ENCODE measurements at regions of chr1 and their contacts with region 1.

Region 1: DNA sequence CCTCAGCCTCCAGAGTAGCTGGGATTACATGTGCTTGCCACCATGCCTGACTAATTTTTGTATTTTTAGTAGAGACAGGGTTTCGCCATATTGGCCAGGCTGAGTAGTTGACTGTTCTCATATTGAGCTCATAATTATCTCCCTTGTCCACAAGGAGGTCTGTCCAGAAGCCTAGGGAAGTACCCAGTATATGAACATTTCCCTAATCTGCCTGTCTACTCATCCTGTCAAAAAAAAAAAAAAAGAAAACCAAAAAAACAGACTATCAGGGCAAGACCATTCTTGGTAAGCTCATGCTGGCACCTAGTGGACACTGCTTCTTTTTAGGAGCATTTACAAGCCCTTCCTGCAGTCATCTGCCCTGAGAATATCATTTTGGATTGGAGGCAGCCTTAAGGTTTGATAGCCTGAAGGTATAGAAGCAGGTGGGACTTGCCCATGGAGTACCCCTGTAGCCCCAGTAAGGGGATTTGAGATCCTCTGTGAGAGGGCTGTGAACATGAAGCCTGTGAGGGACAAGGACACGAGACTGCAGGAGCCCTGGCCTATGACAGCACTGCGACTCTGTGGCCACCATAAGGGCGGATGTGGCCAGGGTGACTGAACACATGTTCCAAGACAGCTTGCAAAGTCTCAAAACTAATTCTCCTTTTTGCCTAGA is 10.8 kb upstream of the DUSP12 start:
- DNase-seq: peak; percentile 69
- ATAC-seq: peak; percentile 67
- H3K4me3 Mint-ChIP-seq: no peak overlapping the region
- H3K27ac Mint-ChIP-seq: no peak overlapping the region
- H3K4me1 Mint-ChIP-seq: peaks cover 23% of the 10 kb centered on the region
- H3K27me3 Mint-ChIP-seq: peaks cover 15% of the 10 kb centered on the region

Region 2: DNA sequence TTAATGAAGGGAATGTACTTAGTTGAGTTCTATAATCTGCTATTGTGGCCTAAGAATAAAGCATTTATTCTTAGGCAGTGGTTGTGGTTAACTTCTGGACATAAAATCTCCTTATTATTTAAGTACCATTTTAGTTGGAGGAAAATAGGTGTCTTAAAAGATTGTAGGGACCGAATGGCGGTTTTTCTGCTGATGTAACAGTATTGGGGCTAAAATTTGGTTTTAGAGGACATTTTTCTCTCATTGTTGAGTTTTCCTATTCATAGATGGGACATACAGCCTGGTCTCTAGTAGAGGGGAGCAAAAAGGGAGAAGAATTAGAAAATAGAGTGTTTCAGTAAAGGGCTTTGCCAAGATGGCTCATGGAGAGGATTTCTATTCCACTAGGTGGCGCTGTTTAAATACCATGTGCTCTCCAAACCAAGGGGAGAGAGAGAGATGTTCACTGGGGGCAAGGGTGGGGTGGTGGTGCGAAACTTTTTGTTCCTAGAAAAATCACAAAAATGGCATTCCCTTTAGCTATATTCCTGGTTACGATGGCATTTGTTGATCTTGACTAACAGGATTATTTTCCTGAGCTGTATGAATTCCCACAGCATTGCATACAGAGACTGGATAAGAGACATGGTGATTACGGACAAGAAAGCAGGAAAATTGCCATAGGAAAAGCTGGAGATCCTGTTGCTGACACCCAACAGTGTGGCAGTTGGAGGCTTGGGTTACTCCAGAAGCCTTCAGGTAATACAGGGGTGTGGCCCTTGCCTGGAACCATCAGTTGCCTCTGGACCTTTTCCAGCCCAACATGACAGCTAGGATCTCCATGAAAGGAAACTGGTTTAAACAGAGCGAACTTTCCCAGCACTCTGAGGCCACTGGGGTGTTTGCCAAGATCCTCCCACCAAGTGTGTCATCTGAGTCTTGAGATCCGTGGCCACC is 251.7 kb before region 1 on chr1:
- CTCF ChIA-PET with region 1: interaction called, 32 read pairs
- POLR2A ChIA-PET with region 1: no interaction called
- intact Hi-C with region 1: loop called (anchors 1 kb)
- DNase-seq: peak; percentile 45
- ATAC-seq: peak; percentile 58
- H3K4me3 Mint-ChIP-seq: no peak overlapping the region
- H3K27ac Mint-ChIP-seq: no peak overlapping the region
- H3K4me1 Mint-ChIP-seq: peaks cover 12% of the 10 kb centered on the region
- H3K27me3 Mint-ChIP-seq: peaks cover 30% of the 10 kb centered on the region

Region 3: DNA sequence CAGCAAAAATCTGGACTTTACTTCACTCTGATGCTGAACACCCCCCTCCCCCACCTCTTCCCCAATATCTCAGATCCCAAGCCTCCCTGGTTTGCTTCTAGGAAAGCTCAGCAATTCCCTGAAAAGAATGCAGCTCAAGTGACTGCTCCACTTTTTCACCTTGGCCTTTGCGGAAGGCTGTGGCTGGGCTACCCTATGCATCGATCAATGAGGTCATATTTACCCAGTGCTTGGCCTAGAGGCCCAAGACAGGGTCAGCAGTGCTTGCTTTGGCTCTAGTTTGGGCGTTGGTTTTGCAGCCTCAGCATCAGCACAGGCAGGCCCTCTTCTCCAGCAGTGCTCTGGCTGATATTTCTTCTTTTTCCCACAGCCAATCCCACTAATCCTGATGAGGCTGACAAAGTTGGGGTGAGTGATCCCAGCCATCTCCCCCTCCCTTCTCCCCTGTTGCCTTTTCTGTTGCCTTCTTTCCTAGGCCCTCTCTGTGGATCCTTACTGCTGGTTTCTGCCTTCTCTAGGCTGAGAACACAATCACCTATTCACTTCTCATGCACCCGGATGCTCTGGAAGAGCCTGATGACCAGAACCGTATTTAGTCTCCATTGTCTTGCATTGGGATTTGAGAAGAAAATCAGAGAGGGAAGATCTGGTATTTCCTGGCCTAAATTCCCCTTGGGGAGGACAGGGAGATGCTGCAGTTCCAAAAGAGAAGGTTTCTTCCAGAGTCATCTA is 61.6 kb before region 1 on chr1:
- CTCF ChIA-PET with region 1: no interaction called
- POLR2A ChIA-PET with region 1: no interaction called
- intact Hi-C with region 1: no loop called
- DNase-seq: no peak
- ATAC-seq: no peak
- H3K4me3 Mint-ChIP-seq: no peak overlapping the region
- H3K27ac Mint-ChIP-seq: no peak overlapping the region
- H3K4me1 Mint-ChIP-seq: peaks cover 4% of the 10 kb centered on the region
- H3K27me3 Mint-ChIP-seq: peaks cover 6% of the 10 kb centered on the region

Region 4: GRCh38 chr1:161706482-161707347 is 32.0 kb before region 1 on chr1 and contains the start of gene FCRLA:
- CTCF ChIA-PET with region 1: interaction called, 5 read pairs
- POLR2A ChIA-PET with region 1: no interaction called
- intact Hi-C with region 1: loop called in 1 of 2 experiments (anchors 5 kb)
- DNase-seq: no peak
- ATAC-seq: peak; percentile 90
- H3K4me3 Mint-ChIP-seq: no peak within 1 kb of the TSS
- H3K27ac Mint-ChIP-seq: no peak within 1 kb of the TSS
- H3K4me1 Mint-ChIP-seq: no peaks in the 10 kb centered on the region
- H3K27me3 Mint-ChIP-seq: peaks cover 13% of the 10 kb centered on the region
- total RNA-seq, gene FCRLA: not detected

Region 5: GRCh38 chr1:161726596-161727457 is 11.9 kb before region 1 on chr1:
- CTCF ChIA-PET with region 1: interaction called, 10 read pairs
- POLR2A ChIA-PET with region 1: interaction called, 6 read pairs
- intact Hi-C with region 1: no loop called
- DNase-seq: peak; percentile 72
- ATAC-seq: peak; percentile 51
- H3K4me3 Mint-ChIP-seq: peak overlapping the region; percentile 73
- H3K27ac Mint-ChIP-seq: no peak overlapping the region
- H3K4me1 Mint-ChIP-seq: peaks cover 47% of the 10 kb centered on the region
- H3K27me3 Mint-ChIP-seq: peaks cover 44% of the 10 kb centered on the region

Region 6: GRCh38 chr1:161805399-161806197 is 66.8 kb after region 1 on chr1:
- CTCF ChIA-PET with region 1: no interaction called
- POLR2A ChIA-PET with region 1: no interaction called
- intact Hi-C with region 1: no loop called
- DNase-seq: no peak
- ATAC-seq: no peak
- H3K4me3 Mint-ChIP-seq: no peak overlapping the region
- H3K27ac Mint-ChIP-seq: peak overlapping the region; percentile 79
- H3K4me1 Mint-ChIP-seq: peaks cover 24% of the 10 kb centered on the region
- H3K27me3 Mint-ChIP-seq: no peaks in the 10 kb centered on the region

Region 7: GRCh38 chr1:161827786-161828185 is 89.0 kb after region 1 on chr1:
- CTCF ChIA-PET with region 1: no interaction called
- POLR2A ChIA-PET with region 1: no interaction called
- intact Hi-C with region 1: no loop called
- DNase-seq: no peak
- ATAC-seq: no peak
- H3K4me3 Mint-ChIP-seq: no peak overlapping the region
- H3K27ac Mint-ChIP-seq: no peak overlapping the region
- H3K4me1 Mint-ChIP-seq: peaks cover 6% of the 10 kb centered on the region
- H3K27me3 Mint-ChIP-seq: no peaks in the 10 kb centered on the region

Region 8: GRCh38 chr1:162357681-162358266 is 619.0 kb after region 1 on chr1:
- CTCF ChIA-PET with region 1: no interaction called
- POLR2A ChIA-PET with region 1: no interaction called
- intact Hi-C with region 1: no loop called
- DNase-seq: no peak
- ATAC-seq: no peak
- H3K4me3 Mint-ChIP-seq: no peak overlapping the region
- H3K27ac Mint-ChIP-seq: no peak overlapping the region
- H3K4me1 Mint-ChIP-seq: no peaks in the 10 kb centered on the region
- H3K27me3 Mint-ChIP-seq: no peaks in the 10 kb centered on the region

Measured in activated CD4-positive, alpha-beta T cell treated with anti-CD3 and anti-CD28 coated beads for 36 hours (primary cell).